Activated naive CD4-positive, alpha-beta T cell treated with anti-CD3 and anti-CD28 coated beads, Interleukin-2, amount 10 ng/mL, durations not matched to agents 7 days and 5 days (primary cell): ENCODE measurements at regions of chr19 and their contacts with region 1.

Region 1: DNA sequence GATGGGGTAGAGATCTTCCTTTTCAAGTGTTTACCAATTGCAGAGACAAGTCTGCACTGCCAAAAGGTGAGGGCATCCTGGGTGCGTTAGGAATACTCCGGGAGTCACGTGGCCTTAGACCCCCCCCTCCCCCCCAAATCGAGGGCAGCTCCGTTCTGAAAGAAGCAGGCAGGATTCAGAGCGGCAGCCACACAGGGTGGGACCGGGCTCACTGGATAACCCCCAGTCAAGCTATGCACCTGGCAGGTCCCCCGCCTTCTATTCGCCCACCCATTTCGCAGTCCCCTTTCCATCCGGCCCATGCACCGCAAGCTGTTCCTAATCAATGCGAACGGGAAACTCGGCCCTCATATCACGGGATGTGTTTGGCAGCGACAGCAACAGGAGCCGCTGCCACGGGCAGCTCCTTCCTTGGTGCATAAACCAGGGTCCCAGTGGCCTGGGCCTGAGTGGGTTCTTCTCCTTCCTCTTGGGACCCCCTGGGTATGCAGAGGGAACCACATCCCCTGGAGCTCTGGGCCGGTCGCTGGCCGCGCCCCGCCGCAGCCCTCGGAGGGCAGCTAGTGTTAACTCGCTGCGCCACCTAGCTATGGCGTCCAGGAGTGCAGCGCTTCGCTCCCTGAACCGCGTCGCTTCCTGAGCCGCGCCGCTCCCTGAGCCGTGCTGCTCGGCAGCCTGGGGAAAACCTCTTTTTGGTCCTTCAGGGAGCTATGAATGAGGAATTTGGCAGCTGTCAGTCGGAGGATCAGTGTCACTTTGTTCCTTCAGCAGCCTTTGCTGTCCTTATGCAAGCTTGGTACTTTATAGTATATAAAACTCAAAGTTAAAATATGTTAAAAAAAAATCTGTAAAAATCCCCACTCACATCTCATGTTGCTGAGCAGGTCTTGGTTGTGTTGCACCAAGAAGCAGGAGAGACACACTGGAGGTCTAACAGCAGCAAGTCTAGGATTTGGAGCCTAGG is 41.4 kb downstream of the LYL1 start:
- DNase-seq: peak; percentile 85
- H3K4me3 Mint-ChIP-seq: peak overlapping the region; percentile 67
- H3K27ac Mint-ChIP-seq: no peak overlapping the region
- H3K4me1 Mint-ChIP-seq: peaks cover 11% of the 10 kb centered on the region
- H3K27me3 Mint-ChIP-seq: peaks cover 63% of the 10 kb centered on the region

Region 2: DNA sequence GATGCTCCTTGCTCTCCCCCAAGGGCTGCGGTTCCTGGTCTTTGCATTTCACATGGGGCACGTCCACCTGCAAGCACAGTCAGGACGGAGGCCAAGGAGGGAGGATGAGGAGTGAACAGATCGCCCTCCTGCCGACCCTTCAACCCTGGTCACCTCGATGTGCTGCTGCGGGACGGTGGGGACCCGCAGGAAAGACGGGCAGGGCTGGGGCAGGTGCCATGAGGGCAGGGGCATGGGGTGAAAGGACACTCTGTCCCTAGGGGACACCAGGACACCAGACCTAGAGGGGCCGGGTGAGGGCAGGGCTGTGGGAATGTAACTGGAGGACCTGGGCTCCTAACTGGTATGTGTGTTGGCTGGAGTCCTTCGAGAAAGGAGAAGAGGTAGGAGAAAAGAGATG is 143.0 kb before region 1 on chr19:
- CTCF ChIA-PET with region 1: no interaction called
- DNase-seq: no peak
- H3K4me3 Mint-ChIP-seq: peak overlapping the region; percentile 76
- H3K27ac Mint-ChIP-seq: peak overlapping the region; percentile 92
- H3K4me1 Mint-ChIP-seq: peaks cover 43% of the 10 kb centered on the region
- H3K27me3 Mint-ChIP-seq: peaks cover 6% of the 10 kb centered on the region

Region 3: DNA sequence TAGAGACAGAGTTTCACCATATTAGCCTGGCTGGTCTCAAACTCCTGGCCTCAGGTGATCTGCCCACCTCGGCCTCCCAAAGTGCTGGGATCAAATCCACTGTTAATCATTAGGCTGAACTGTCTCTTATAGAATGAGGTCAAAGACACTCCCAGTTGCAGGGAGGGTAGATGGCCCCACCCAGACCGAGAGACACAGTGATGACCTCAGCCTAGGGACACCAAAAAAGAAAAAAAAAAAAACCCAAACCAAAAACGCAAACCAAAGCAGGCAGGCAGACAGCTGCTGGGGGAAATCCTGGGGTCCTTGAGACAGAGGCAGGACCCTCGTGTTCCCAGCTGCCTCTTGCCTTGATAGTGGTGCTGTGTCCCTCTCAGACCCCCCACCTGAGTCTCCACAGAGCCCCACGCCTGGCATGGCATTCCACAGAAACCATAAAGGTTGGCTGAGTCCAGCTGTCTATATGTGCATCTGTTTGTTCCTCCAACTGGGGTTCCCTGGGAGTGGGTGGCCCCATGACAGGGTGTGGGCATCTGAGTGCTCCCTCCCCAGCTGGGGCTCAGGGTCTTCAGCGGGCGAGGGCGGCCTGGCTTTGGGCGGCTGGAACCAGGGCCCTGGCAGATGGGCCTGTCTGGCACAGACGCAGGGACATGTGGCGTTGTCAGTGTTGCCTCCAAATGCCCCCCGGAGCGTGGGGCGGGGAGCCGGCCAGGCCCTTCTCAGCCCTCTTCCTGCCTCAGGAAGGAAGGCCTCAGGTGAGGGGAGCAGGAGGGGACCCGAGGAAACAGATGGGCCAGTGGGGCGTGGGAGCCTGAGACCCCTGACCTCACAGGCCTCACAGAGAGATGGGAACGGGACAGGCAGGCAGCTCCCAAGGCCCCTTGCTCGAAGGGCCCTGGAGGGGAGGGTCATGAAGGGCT is 86.7 kb before region 1 on chr19:
- CTCF ChIA-PET with region 1: interaction called, 81 read pairs
- DNase-seq: no peak
- H3K4me3 Mint-ChIP-seq: no peak overlapping the region
- H3K27ac Mint-ChIP-seq: no peak overlapping the region
- H3K4me1 Mint-ChIP-seq: peaks cover 2% of the 10 kb centered on the region
- H3K27me3 Mint-ChIP-seq: peaks cover 59% of the 10 kb centered on the region

Region 4: DNA sequence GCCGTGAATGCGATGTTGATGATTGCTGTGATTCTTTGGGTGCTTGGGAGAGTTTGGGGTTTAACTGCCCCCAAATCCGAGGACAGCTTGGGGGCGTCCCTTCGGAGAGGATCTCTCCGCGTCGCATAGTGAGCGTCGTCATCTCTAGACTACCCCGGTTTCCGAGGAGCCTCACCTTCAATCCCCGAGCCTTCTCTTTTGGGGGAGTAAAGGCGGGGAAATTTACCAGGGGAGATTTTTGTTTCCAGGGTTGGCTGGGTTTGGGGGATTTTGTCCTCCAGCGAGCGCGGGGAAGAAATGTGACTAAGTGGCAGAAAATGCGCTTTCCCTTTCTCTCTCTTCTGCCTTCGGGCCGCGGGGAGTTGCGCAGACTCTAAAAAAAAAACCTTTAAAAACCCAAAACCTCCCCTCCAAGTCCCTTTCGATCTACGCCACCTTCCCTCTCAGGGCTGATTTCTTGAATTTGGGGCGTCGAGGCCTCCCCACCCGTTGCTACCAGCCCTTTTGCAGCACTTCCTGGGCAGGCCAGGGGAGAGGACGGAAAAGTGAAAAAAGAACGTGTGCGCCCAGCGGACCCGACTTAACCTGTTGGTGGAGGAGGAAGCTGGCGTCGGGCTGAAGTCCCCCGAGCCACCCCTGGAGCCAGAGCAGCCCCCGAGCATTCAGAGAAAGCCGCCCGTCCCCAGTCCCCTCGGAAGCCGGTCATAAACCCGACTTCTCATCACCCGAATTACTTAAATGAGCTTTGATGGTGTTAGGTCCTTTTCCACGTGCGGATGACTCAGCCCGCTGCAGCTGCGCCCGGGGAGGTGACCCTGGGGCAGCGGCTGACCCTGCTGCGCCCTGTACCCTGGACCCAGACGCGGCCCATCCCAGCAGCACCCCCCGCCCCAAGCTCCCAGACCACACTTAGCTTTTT is 48.3 kb before region 1 on chr19:
- CTCF ChIA-PET with region 1: interaction called, 13 read pairs
- DNase-seq: peak; percentile 51
- H3K4me3 Mint-ChIP-seq: peak overlapping the region; percentile 56
- H3K27ac Mint-ChIP-seq: peak overlapping the region; percentile 7
- H3K4me1 Mint-ChIP-seq: peaks cover 23% of the 10 kb centered on the region
- H3K27me3 Mint-ChIP-seq: peaks cover 100% of the 10 kb centered on the region

Region 5: GRCh38 chr19:13042443-13043130 is 18.7 kb before region 1 on chr19:
- CTCF ChIA-PET with region 1: interaction called, 11 read pairs
- DNase-seq: no peak
- H3K4me3 Mint-ChIP-seq: no peak overlapping the region
- H3K27ac Mint-ChIP-seq: no peak overlapping the region
- H3K4me1 Mint-ChIP-seq: no peaks in the 10 kb centered on the region
- H3K27me3 Mint-ChIP-seq: peaks cover 12% of the 10 kb centered on the region

Region 6: GRCh38 chr19:13093407-13094105 is 32.3 kb after region 1 on chr19:
- CTCF ChIA-PET with region 1: interaction called, 39 read pairs
- DNase-seq: peak; percentile 87
- H3K4me3 Mint-ChIP-seq: no peak overlapping the region
- H3K27ac Mint-ChIP-seq: no peak overlapping the region
- H3K4me1 Mint-ChIP-seq: peaks cover 34% of the 10 kb centered on the region
- H3K27me3 Mint-ChIP-seq: peaks cover 74% of the 10 kb centered on the region

Region 7: GRCh38 chr19:13143135-13143534 is 81.9 kb after region 1 on chr19:
- CTCF ChIA-PET with region 1: no interaction called
- DNase-seq: no peak
- H3K4me3 Mint-ChIP-seq: no peak overlapping the region
- H3K27ac Mint-ChIP-seq: no peak overlapping the region
- H3K4me1 Mint-ChIP-seq: peaks cover 9% of the 10 kb centered on the region
- H3K27me3 Mint-ChIP-seq: no peaks in the 10 kb centered on the region